GM10248 (cell line): ENCODE measurements at regions of chr3 and their contacts with region 1.

Region 1: GRCh38 chr3:45507820-45508317 is 86.7 kb upstream of the LIMD1 start:
- DNase-seq: no peak
- CTCF ChIP-seq: no peak

Region 2: DNA sequence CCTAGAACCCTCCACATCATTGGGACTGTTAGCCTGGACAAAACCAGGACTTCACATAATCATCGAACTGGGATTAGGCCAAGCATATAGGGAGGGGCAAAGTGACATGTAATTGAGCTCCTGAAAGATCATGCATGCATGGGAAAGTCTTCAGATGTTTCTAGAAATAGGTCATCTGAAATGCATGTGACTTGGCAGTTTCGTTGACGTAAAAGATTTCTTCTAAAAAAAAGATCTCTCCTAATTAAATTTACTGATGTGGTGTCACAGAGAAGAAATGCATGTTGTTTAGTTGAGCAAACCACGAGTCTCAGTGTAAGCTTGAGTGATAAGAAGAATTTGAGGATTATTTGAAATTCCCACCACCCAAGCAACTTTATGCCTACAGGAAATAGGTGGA is 16.7 kb after region 1 on chr3:
- CTCF ChIA-PET with region 1: interaction called, 10 read pairs
- POLR2A ChIA-PET with region 1: no interaction called
- DNase-seq: no peak
- CTCF ChIP-seq: no peak

Region 3: DNA sequence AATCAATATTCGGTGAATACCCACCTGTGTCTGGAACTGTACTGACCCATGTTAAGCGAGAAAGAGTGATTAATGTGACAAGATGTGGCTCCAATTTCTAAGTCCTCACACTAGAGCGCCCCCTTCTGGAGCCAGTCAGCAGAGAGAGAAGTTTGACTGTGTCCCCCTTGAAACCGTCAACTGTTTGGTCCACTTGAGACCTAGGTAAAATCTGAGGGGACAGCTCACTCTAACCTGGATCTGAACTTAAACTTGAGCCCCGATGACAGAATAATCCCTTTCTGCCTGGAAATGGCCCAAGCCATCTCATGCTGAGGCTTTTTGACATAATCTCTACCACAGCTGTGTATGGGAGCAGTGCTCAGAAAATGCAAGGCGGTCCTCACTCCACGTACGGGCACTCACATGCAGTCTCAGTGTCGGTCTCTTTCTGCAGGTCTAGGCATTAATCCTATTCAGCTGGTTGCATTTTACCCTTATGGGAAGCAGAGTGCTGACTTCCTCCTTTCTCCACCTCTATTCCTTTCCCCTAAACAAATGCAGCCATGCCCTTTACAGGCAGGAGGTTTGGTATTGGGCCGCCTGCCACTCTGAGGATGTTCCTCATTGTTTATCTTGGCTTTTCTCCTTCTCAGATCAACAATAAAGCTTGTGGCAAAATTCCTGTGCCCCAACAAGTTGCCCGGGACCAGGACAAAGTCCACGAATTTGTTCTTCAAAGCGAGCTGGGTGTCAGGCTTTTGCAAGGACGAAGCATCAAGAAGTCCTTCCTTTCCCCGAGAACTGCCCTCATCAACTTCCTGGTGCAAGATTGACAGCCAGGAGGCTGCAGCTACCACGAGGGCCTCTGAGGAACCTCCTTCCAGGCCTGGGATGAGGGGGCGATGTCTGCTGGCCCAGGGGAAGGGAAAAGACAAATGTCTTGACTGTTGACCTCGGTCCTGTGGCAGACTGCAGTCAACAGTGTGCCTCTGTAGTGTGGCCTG is 39.1 kb after region 1 on chr3:
- CTCF ChIA-PET with region 1: interaction called, 13 read pairs
- POLR2A ChIA-PET with region 1: no interaction called
- DNase-seq: no peak
- CTCF ChIP-seq: peak; percentile 31

Region 4: DNA sequence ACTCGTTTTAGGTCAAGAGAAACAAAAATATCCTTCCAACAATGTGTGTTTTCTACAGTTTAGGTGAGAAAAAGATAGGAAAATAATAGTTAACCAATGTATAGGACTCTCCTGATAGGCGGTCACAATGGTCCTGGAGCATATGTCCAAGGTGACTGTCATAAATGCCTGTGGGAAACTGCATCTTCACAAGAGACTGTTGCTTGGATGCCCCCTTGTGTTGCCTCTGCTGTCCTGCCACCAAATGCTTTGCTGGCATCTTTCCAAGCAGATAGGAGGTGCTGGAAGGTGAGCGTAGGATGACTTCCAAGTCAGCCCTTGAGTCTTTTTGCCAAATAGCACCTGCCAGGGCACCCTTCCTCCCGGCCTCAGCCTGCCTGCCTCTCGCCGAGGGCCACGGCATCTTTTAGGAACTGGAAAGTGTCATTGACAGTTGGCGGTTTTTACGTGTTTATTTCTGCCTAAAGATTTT is 157.3 kb after region 1 on chr3:
- CTCF ChIA-PET with region 1: interaction called, 84 read pairs
- POLR2A ChIA-PET with region 1: no interaction called
- DNase-seq: peak; percentile 46
- CTCF ChIP-seq: peak; percentile 50

Region 5: DNA sequence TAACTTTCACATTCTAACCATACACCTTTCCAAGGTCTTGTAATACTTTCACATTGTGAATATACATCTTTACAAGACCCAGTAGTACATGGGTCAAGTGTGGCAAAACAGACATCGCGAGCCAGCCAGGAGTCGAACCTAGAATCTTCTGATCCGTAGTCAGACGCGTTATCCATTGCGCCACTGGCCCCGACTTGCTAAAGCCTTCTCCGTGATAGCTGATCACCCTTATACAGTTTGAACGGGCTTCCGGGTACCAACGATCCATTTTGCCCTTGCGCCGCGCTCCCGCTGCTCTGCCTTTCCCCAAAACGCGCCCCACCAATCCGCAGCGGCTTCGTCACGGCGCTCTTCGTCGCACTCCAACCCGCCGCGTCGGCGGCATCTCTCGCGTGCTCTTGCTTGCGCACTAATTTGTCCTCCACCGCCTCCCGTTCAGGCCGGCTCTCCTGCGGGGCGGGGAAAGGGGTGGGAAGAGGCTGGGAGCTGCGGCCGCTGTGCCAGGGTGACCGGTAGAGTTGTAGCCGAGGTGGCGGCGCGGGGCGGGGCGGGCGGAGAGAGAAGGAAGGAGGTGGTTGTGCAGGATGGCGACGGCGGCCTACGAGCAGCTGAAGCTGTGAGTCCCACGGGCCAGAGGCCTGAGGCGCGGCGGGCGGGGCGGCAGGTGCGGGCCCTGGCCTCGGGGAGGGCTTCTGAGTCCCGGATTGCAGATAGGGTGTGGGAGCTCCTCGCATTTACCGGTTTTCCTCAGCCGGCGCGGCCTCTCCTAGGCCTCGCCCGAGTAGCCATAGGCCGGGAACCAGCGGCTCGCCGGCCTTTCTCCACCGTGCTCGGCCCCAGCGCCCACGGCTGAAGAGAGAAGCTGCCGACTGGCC is 181.2 kb after region 1 on chr3 and contains the start of gene SACM1L:
- CTCF ChIA-PET with region 1: interaction called, 10 read pairs
- POLR2A ChIA-PET with region 1: no interaction called
- DNase-seq: peak; percentile 90
- CTCF ChIP-seq: no peak

Region 6: GRCh38 chr3:45923755-45924154 is 415.9 kb after region 1 on chr3:
- CTCF ChIA-PET with region 1: interaction called, 15 read pairs
- POLR2A ChIA-PET with region 1: no interaction called
- DNase-seq: no peak
- CTCF ChIP-seq: no peak